ENCODE measurements at regions of chr2 and their contacts with region 1.

Region 1: GRCh38 chr2:216692636-216693413 is 2.5 kb downstream of the IGFBP5 start:
- DNase-seq: peak; percentile 89
- ATAC-seq: peak; percentile 70
- H3K4me3 Mint-ChIP-seq: peak overlapping the region; percentile 85
- H3K27ac Mint-ChIP-seq: peak overlapping the region; percentile 80
- H3K4me1 Mint-ChIP-seq: peaks cover 41% of the 10 kb centered on the region
- H3K27me3 Mint-ChIP-seq: peaks cover 63% of the 10 kb centered on the region

Region 2: GRCh38 chr2:216680951-216681629 is 11.7 kb before region 1 on chr2:
- CTCF ChIA-PET with region 1: interaction called, 11 read pairs
- POLR2A ChIA-PET with region 1: no interaction called
- DNase-seq: no peak
- ATAC-seq: no peak
- H3K4me3 Mint-ChIP-seq: no peak overlapping the region
- H3K27ac Mint-ChIP-seq: no peak overlapping the region
- H3K4me1 Mint-ChIP-seq: peaks cover 11% of the 10 kb centered on the region
- H3K27me3 Mint-ChIP-seq: peaks cover 16% of the 10 kb centered on the region

Region 3: DNA sequence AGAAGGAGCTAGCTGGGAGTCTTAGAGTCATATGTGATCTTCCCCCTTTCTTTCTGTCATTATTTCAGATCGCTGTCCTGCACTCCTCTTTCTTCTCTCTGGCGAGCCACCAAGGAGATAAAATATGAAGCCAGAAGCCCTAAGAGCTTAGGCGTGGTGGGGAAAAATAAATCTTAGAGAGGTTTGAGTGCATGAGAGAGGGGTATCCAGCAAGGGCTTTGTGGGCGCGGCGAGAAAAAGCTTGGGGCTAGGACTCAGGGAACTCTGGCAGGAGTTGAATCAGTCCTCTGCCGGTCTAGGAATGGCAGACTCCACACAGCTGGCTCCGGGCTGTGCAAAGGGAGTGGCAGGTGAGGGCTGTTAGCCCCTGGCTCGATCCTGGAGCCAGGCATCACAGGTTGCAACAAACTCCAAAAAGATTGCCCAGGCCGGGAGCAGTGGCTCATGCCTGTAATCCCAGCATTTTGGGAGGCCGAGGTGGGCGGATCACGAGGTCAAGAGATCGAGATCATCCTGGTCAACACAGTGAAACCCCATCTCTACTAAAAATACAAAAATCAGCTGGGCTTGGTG is 22.7 kb after region 1 on chr2:
- CTCF ChIA-PET with region 1: no interaction called
- POLR2A ChIA-PET with region 1: no interaction called
- DNase-seq: no peak
- ATAC-seq: no peak
- H3K4me3 Mint-ChIP-seq: no peak overlapping the region
- H3K27ac Mint-ChIP-seq: no peak overlapping the region
- H3K4me1 Mint-ChIP-seq: no peaks in the 10 kb centered on the region
- H3K27me3 Mint-ChIP-seq: peaks cover 10% of the 10 kb centered on the region

Region 4: GRCh38 chr2:216752855-216753505 is 60.2 kb after region 1 on chr2:
- CTCF ChIA-PET with region 1: no interaction called
- POLR2A ChIA-PET with region 1: no interaction called
- DNase-seq: no peak
- ATAC-seq: no peak
- H3K4me3 Mint-ChIP-seq: no peak overlapping the region
- H3K27ac Mint-ChIP-seq: no peak overlapping the region
- H3K4me1 Mint-ChIP-seq: peaks cover 1% of the 10 kb centered on the region
- H3K27me3 Mint-ChIP-seq: peaks cover 54% of the 10 kb centered on the region

Region 5: GRCh38 chr2:216777650-216778273 is 84.9 kb after region 1 on chr2:
- CTCF ChIA-PET with region 1: no interaction called
- POLR2A ChIA-PET with region 1: no interaction called
- DNase-seq: peak; percentile 76
- ATAC-seq: peak; percentile 98
- H3K4me3 Mint-ChIP-seq: no peak overlapping the region
- H3K27ac Mint-ChIP-seq: peak overlapping the region; percentile 23
- H3K4me1 Mint-ChIP-seq: peaks cover 6% of the 10 kb centered on the region
- H3K27me3 Mint-ChIP-seq: peaks cover 18% of the 10 kb centered on the region